ENCODE measurements at regions of chr16 and their contacts with region 1.

Region 1: GRCh38 chr16:84726079-84726668 is 26.4 kb downstream of the USP10 start:
- DNase-seq: peak; percentile 93 to 94
- H3K4me3 ChIP-seq: peak overlapping the region in 2 of 4 donors; percentile 23 to 24
- H3K27ac ChIP-seq: peak overlapping the region in 4 of 5 donors; percentile 21 to 72 (median 69)
- H3K4me1 ChIP-seq: peaks cover 37 to 86% (median 67%) of the 10 kb centered on the region in 4 donors
- H3K27me3 ChIP-seq: no peaks in the 10 kb centered on the region
- CTCF ChIP-seq: peak in 5 of 7 experiments; percentile 71 to 94 (median 89)
- EP300 ChIP-seq: no peak
- POLR2A ChIP-seq: no peak

Region 2: DNA sequence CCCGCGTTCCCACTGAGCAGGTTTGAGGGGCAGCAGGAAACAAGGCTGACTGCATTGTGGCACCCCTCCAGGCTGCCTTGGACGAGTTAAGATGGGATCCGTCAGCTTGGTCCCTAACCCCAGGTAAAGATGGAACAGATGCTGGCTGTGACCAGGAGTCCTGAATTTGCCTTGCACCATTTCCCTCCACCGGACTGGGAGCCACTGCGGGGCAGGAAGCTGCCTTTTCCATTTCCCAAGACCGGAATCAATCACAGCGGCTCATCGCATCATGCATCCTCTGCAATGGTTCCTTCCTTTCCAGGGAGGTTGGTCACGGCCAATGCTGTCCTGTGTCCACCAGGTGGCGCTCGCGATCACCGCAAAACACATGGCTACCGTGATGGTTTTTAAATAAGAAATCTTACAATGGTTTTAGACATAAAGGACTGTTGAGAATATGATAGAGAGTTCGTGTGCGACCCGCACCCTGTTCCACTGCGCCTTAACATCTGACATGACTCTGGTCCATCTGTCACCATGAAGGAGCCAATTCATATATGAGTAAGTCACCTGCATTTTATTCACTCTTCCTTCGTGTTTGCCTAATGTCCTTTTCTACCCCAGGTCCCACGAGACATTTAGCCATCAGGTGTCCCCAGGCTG is 214.9 kb before region 1 on chr16:
- intact Hi-C with region 1: loop called (anchors 5 kb)
- DNase-seq: peak; percentile 90 to 94
- H3K4me3 ChIP-seq: no peak overlapping the region
- H3K27ac ChIP-seq: no peak overlapping the region
- H3K4me1 ChIP-seq: peaks cover 0 to 34% (median 13%) of the 10 kb centered on the region in 4 donors
- H3K27me3 ChIP-seq: no peaks in the 10 kb centered on the region
- CTCF ChIP-seq: peak in 6 of 7 experiments; percentile 62 to 97 (median 96)
- EP300 ChIP-seq: no peak
- POLR2A ChIP-seq: no peak

Region 3: GRCh38 chr16:84521497-84521770 is 204.7 kb before region 1 on chr16:
- intact Hi-C with region 1: no loop called
- DNase-seq: no peak
- H3K4me3 ChIP-seq: no peak overlapping the region
- H3K27ac ChIP-seq: no peak overlapping the region
- H3K4me1 ChIP-seq: peaks cover under 1 to 5% (median 2%) of the 10 kb centered on the region in 4 donors
- H3K27me3 ChIP-seq: no peaks in the 10 kb centered on the region
- CTCF ChIP-seq: no peak
- EP300 ChIP-seq: no peak
- POLR2A ChIP-seq: no peak

Region 4: DNA sequence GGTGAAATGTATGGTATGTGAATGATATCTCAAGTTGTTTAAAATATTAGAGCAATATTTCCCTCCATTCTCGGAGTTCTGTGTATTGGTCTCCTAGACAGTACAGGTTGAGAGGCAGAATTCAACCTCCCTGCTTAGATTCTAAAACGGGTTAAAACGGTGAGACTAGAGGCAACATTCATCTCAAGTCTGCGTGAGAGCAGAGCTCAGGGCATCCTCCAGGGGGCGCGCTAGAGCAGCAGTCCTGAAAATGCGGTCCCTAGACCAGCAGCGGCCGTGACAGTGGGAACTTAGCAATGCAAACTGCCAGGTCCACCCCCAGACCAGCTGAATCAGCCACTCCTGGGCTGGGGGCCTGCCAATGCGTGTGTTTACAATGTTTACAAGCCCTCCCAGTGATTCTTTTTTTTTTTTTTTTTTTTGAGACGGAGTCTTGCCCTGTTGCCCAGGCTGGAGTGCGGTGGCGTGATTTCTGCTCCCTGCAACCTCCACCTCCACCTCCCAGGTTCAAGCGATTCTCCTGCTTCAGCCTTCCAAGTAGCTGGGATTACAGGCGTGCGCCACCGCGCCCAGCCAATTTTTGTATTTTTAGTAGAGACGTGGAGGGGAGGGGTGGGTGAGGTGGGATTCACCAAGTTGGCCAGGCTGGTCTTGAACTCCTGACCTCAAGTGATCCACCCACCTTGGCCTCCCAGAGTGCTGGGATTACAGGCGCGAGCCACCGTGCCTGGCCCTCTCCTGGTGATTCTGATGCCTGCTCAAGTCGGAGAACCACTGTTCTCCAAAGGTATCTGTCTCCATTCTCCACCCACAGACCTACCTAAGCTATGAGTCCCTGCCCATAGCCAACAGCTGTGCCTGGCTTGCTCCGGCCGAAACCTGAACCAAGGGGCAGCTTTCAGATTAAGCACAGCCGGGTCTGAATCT is 53.6 kb before region 1 on chr16:
- intact Hi-C with region 1: loop called (anchors 5 kb)
- DNase-seq: peak; percentile 87 to 88
- H3K4me3 ChIP-seq: no peak overlapping the region
- H3K27ac ChIP-seq: no peak overlapping the region
- H3K4me1 ChIP-seq: peaks cover 0 to 11% (median 8%) of the 10 kb centered on the region in 4 donors
- H3K27me3 ChIP-seq: no peaks in the 10 kb centered on the region
- CTCF ChIP-seq: peak in 5 of 7 experiments; percentile 66 to 92 (median 87)
- EP300 ChIP-seq: no peak
- POLR2A ChIP-seq: no peak

Measured in stomach (tissue), 19 donors.